ENCODE measurements at regions of chr15 and their contacts with region 1.

Region 1: DNA sequence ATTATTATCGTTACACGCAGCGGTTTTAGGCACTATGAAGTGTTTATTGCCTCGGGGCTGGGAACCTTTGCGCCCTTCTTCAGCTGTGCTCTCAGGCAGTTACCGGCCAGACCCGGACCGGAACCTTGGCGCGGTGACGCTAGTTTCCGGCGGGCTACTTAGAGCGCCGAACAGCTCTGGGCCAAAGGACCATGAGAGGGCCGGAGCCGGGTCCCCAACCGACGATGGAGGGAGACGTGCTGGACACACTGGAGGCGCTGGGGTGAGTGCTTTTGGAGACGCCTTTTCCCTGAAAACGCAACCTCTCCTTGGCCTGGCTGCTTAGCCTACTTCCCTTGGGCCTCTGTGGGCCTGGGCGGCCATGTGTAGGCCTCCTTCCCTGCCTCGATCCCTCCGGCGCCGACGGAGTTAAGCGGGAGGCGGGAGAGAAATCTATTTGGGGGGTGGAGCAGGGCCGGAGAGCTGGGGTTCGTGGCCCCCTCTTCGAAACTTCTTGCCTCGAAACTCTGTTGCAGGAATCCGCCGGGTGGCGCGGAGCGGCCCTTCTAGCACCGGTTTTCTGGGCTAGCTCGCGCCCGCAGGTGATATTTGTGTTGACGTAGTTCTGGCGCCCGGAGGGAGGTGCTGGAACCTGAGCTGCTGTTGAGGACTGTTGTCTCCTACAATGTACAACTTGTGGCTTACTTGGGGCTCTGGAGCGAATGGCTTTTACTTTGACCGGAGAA is at the start of gene FAM98B:
- DNase-seq: peak; percentile 88 to 90
- ATAC-seq: peak; percentile 96 to 99 (median 98)
- H3K4me3 ChIP-seq: peak within 1 kb of the TSS; percentile 65 to 93 (median 84)
- H3K27ac ChIP-seq: peak within 1 kb of the TSS; percentile 49 to 94 (median 90)
- H3K4me1 ChIP-seq: peaks cover 0 to 23% (median 16%) of the 10 kb centered on the region in 9 donors
- H3K27me3 ChIP-seq: no peaks in the 10 kb centered on the region
- CTCF ChIP-seq: no peak
- total RNA-seq, gene FAM98B: 16.7 to 30.6 (median 25.0) TPM

Region 2: DNA sequence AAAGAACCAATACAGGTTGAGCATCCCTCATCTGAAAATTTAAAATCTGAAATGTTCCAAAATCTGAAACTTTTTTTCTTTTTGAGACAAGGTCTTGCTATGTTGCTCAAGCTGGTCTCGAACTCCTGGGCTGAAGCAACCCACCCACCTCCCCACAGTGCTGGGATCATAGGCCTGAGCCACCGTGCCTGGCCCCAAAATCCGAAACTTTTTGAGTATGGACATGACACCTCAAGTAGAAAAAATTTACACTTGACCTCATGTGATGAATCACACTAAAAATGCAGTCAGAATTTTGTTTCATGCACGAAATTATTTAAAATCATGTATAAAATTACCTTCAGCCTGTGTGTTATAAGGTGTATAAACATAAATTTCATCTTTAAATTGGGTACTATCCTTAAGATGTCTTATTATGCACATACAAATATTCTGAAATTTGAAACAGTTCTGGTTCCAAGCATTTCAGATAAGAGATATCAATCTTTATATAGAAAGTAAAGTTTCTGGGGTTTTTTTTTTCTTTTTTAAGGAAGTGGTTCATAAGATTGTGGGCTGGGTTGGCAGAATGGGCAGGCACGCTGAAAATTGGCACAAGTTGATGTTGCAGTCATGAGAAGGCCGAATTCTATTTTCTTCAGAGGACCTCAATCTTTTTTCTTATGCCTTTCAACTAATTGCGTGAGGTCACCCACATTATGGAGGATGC is 129.0 kb before region 1 on chr15:
- intact Hi-C with region 1: no loop called
- DNase-seq: no peak
- ATAC-seq: no peak
- H3K4me3 ChIP-seq: no peak overlapping the region
- H3K27ac ChIP-seq: no peak overlapping the region
- H3K4me1 ChIP-seq: peaks cover 0 to 5% (median 0%) of the 10 kb centered on the region in 9 donors
- H3K27me3 ChIP-seq: no peaks in the 10 kb centered on the region
- CTCF ChIP-seq: no peak

Region 3: GRCh38 chr15:38490242-38490922 is 36.2 kb after region 1 on chr15:
- intact Hi-C with region 1: no loop called
- DNase-seq: no peak
- ATAC-seq: no peak
- H3K4me3 ChIP-seq: no peak overlapping the region
- H3K27ac ChIP-seq: no peak overlapping the region
- H3K4me1 ChIP-seq: no peaks in the 10 kb centered on the region
- H3K27me3 ChIP-seq: no peaks in the 10 kb centered on the region
- CTCF ChIP-seq: no peak

Region 4: DNA sequence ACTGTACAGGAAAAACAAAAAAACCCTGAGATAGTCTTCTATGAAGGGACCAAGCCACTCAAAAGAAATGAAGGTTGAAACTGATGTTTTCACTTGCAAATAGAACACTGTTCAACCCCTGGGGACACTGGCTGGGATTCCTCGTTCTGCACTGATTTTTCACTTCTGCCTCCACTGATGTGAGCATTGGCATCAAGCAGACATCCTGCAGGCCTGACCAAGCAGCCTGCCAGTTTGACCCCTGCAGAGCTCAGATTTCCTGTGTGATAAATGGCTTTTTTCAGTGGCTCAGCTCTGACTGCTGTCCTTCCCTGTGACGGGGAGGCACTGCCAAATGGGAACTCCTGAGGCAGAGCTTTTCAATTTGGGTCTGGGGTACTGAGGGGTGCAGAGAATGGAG is 60.5 kb after region 1 on chr15:
- intact Hi-C with region 1: loop called in 1 of 10 experiments (anchors 10 kb)
- DNase-seq: no peak
- ATAC-seq: no peak
- H3K4me3 ChIP-seq: no peak overlapping the region
- H3K27ac ChIP-seq: no peak overlapping the region
- H3K4me1 ChIP-seq: no peaks in the 10 kb centered on the region
- H3K27me3 ChIP-seq: peaks cover 0 to 40% (median 8%) of the 10 kb centered on the region in 7 donors
- CTCF ChIP-seq: no peak

Region 5: GRCh38 chr15:38996111-38996631 is 542.0 kb after region 1 on chr15:
- intact Hi-C with region 1: no loop called
- DNase-seq: no peak
- ATAC-seq: peak in 2 of 8 donors; percentile 36 to 38
- H3K4me3 ChIP-seq: no peak overlapping the region
- H3K27ac ChIP-seq: peak overlapping the region in 5 of 10 donors; percentile 1 to 77 (median 23)
- H3K4me1 ChIP-seq: peaks cover 0 to 41% (median 20%) of the 10 kb centered on the region in 9 donors
- H3K27me3 ChIP-seq: no peaks in the 10 kb centered on the region
- CTCF ChIP-seq: no peak

Measured in heart right ventricle (tissue), 16 donors.